Tibial artery (tissue), 4 donors: ENCODE measurements at regions of chr11 and their contacts with region 1.

Region 1: GRCh38 chr11:63478896-63479295 is 12.1 kb downstream of the PLAAT5 start:
- DNase-seq: peak in 1 of 2 donors; percentile 31
- H3K4me3 ChIP-seq: no peak overlapping the region
- H3K27ac ChIP-seq: peak overlapping the region in 1 of 2 donors; percentile 4
- H3K4me1 ChIP-seq: peaks cover 0 to 8% (median 0%) of the 10 kb centered on the region in 4 donors
- H3K27me3 ChIP-seq: no peaks in the 10 kb centered on the region
- CTCF ChIP-seq: peak; percentile 83 to 92

Region 2: GRCh38 chr11:63277345-63277943 is 201.5 kb before region 1 on chr11:
- intact Hi-C with region 1: no loop called
- DNase-seq: no peak
- H3K4me3 ChIP-seq: no peak overlapping the region
- H3K27ac ChIP-seq: no peak overlapping the region
- H3K4me1 ChIP-seq: peaks cover 0 to 29% (median 5%) of the 10 kb centered on the region in 4 donors
- H3K27me3 ChIP-seq: no peaks in the 10 kb centered on the region
- CTCF ChIP-seq: no peak

Region 3: DNA sequence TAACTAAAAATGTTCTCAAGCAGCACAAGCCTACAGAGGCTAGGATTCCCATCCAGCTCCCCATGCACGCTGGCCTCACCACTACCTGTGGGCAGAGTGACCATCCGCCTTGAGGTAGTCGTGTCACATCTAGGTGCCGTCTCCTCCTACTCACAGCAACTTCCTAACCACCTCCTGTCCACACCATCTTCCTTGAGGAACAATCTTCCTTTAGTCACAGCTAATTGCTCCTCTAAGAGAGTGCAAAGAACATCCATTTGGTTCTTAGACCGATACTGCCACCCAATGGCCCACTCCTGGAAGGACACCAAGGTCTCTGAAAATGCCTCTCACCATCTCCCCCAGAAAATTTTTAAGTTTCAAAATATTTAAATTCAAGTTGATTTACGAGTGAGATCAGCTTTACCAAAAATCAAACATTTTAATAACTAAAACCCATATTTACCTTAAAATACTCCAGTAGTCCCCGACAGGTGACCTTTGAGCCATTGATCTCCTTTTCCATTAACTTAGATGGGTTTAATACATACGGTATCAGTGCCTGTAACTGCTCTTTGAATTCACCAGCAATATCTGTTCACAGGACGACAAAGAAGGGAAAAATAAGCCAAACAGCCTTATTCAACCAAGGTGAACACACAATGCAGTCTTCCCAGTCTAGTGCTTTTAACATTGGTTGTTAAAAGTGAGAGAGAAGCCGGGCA is 157.0 kb after region 1 on chr11:
- intact Hi-C with region 1: loop called (anchors 5 kb)
- DNase-seq: peak in 1 of 2 donors; percentile 49
- H3K4me3 ChIP-seq: no peak overlapping the region
- H3K27ac ChIP-seq: no peak overlapping the region
- H3K4me1 ChIP-seq: no peaks in the 10 kb centered on the region
- H3K27me3 ChIP-seq: no peaks in the 10 kb centered on the region
- CTCF ChIP-seq: peak; percentile 68 to 76